Caco-2 (cell line): ENCODE measurements at regions of chr9 and their contacts with region 1.

Region 1: DNA sequence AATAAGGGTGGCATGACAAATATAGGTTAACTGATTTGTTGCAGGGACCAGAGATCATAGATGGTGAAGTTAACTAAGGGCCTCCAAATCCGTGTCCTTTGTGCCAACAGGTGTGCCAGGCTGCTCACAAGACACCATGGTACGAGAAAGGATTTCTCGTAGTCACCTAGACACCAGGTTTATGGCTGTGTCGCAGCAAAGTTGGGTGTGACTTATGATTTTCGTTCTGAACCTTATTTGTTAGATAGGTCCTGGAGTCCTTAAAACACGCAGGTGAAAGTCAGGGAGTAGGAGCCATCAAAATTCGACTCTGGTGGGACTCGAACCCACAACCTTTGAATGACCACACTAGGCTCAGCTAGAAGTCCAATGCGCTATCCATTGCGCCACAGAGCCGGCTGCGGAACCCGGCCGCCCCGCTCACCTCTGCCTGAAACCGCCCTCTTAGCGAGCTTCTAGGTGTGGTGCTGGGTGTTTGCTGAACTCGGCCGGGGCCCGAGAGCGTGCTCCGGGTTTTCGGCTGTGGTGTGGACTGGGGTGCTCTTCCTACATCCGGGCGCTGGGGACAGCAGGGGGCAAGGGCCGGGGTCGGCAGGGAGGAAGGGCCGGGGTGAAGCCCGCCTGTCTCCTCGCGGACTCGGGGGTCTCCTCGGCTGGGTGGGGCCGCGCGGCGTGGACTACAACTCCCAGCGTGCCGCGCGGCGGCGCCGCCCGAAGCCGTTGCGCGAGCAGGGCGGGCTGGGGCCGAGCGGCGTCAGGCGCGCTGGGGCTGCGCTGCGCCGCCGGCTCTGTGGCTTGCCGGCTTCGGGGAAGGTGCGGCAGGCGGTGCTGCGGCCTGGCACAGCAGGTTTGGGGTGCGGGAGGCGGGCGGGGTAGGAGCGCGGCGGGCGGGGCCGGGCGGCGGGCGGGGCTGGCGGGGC is at the start of gene SLC27A4:
- DNase-seq: peak; percentile 92
- H3K4me3 ChIP-seq: peak within 1 kb of the TSS; percentile 91
- H3K4me3 Mint-ChIP-seq: peak within 1 kb of the TSS; percentile 81
- H3K27ac Mint-ChIP-seq: peak within 1 kb of the TSS; percentile 94
- H3K4me1 ChIP-seq: no peaks in the 10 kb centered on the region
- H3K4me1 Mint-ChIP-seq: no peaks in the 10 kb centered on the region
- H3K27me3 ChIP-seq: no peaks in the 10 kb centered on the region
- H3K27me3 Mint-ChIP-seq: no peaks in the 10 kb centered on the region
- CTCF ChIP-seq: no peak
- total RNA-seq, gene SLC27A4: 21.1 and 22.8 TPM in 2 replicates

Region 2: DNA sequence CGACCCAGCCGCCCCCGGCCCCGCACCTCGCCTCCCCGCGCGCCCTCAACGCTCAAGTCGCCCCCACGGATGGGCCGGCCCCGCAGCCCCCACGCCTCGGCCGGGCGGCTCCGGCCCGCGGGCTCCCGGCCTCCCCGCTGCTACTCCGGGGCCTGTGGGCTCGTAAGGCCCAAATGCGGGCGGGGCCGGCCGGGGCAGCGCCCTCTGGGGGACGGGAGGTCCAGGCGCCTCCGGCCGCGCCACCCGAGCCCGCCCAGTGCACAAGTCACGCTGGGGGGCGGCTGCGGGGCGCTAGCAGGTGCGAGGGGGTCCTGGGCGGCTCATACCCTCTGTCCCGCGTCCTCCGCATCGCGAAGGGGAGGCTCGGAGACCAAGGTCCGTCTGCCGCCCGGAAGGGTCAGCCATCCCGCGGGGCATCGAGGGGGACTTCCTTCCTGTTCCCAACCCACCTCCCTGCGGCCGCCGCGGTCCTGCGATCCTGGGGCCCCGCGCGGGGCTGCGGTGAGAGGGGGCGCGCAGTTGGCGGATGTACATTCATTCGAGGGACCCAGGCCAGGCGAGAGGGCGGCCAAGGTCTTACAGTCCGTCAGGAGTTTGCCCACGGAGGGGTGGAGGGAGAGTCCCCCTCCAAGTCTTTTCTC is 148.5 kb before region 1 on chr9 and contains the start of gene CIZ1:
- CTCF ChIA-PET with region 1: no interaction called
- POLR2A ChIA-PET with region 1: no interaction called
- intact Hi-C with region 1: loop called (anchors 10 kb)
- DNase-seq: peak; percentile 74 to 88
- H3K4me3 ChIP-seq: peak within 1 kb of the TSS; percentile 98
- H3K4me3 Mint-ChIP-seq: peak within 1 kb of the TSS; percentile 89
- H3K27ac Mint-ChIP-seq: peak within 1 kb of the TSS; percentile 96
- H3K4me1 ChIP-seq: 0 out of 2 replicates have a peak, but pooled peaks cover 7% of the 10 kb centered on the region
- H3K4me1 Mint-ChIP-seq: peaks cover 8% of the 10 kb centered on the region
- H3K27me3 ChIP-seq: no peaks in the 10 kb centered on the region
- H3K27me3 Mint-ChIP-seq: no peaks in the 10 kb centered on the region
- CTCF ChIP-seq: peak; percentile 61 to 79
- total RNA-seq, gene CIZ1: 154 and 187 TPM in 2 replicates

Region 3: DNA sequence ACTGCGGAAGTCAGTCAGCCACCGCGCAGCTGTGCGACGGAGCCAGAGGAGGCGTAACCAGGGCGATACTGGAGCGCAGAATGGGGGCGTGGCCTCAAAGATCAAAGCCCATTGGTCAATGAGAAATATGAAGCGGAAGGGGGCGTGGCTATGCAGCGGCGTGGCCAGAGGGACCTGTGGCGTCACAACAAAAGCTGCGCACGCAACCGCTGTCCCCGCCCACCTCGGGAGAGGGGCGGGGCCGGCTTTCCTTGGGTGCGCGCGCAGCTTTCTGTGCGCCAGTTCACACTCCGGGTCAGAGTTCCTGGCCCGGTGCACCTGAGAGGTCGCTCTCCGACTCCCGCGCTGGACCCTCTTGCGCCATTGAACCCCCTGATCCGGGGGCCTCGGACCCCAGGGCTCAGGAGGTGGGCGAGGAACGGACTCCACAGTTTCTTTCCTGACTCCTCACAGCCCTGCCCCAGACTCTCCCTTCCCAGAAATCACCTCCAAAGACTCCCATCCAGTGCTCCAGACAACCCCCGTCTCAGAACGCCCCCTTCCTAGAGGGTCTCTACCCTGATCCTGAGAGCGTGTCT is 63.9 kb before region 1 on chr9 and contains the starts of genes GOLGA2 and SWI5:
- CTCF ChIA-PET with region 1: interaction called, 6 read pairs
- POLR2A ChIA-PET with region 1: no interaction called
- intact Hi-C with region 1: loop called (anchors 1 kb)
- DNase-seq: peak; percentile 99 to 100
- H3K4me3 ChIP-seq: peak within 1 kb of the TSS; percentile 88
- H3K4me3 Mint-ChIP-seq: peak within 1 kb of the TSS; percentile 98
- H3K27ac Mint-ChIP-seq: peak within 1 kb of the TSS; percentile 97
- H3K4me1 ChIP-seq: peaks cover 5% of the 10 kb centered on the region
- H3K4me1 Mint-ChIP-seq: peaks cover 30% of the 10 kb centered on the region
- H3K27me3 ChIP-seq: no peaks in the 10 kb centered on the region
- H3K27me3 Mint-ChIP-seq: peaks cover 2% of the 10 kb centered on the region
- CTCF ChIP-seq: no peak
- total RNA-seq, gene GOLGA2: 97.7 and 102 TPM in 2 replicates
- total RNA-seq, gene SWI5: 18.0 and 19.8 TPM in 2 replicates

Region 4: DNA sequence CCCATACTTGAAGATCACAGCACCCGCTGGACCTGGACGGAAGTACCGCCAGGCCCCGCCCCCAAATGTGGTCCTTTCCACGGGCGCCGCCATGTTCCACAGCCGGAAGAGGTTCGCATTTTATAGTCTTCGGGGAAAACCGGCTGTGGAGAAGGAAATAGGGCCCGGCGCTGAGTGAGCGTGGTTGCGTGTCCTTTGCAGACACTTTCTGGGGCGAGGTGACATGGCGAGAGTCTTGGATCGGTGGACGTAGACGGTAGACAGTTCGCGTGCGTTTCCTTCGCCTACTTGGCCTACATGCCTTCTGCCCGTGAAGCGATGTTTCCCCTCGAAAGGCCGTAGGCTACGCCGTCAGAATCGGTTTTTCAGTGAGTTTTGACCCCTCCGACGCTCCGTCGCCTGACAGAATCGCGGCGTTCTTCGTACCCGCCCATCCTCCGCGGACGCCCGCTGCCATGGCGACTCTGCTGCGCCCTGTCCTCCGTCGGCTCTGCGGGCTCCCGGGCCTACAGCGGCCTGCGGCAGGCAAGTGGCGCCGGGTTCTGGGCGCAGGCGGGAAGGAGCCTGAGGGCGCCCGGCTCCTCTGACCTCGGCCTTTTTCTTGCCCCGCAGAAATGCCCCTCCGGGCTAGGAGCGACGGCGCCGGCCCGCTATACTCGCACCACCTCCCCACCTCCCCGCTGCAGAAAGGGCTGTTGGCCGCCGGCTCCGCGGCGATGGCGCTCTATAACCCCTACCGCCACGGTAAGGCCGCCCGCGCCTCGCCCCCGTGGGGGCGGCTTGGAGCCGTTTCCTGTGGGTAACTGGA is 17.4 kb before region 1 on chr9 and contains the starts of genes COQ4 and TRUB2:
- CTCF ChIA-PET with region 1: no interaction called
- POLR2A ChIA-PET with region 1: no interaction called
- intact Hi-C with region 1: loop called (anchors 1 kb)
- DNase-seq: peak; percentile 92 to 94
- H3K4me3 ChIP-seq: peak within 1 kb of the TSS; percentile 83
- H3K4me3 Mint-ChIP-seq: peak within 1 kb of the TSS; percentile 91
- H3K27ac Mint-ChIP-seq: peak within 1 kb of the TSS; percentile 96
- H3K4me1 ChIP-seq: 0 out of 2 replicates have a peak, but pooled peaks cover 4% of the 10 kb centered on the region
- H3K4me1 Mint-ChIP-seq: peaks cover 1% of the 10 kb centered on the region
- H3K27me3 ChIP-seq: no peaks in the 10 kb centered on the region
- H3K27me3 Mint-ChIP-seq: no peaks in the 10 kb centered on the region
- CTCF ChIP-seq: no peak
- total RNA-seq, gene COQ4: 48.9 and 49.5 TPM in 2 replicates
- total RNA-seq, gene TRUB2: 34.1 and 37.4 TPM in 2 replicates

Region 5: GRCh38 chr9:128361986-128362646 is 22.1 kb after region 1 on chr9:
- CTCF ChIA-PET with region 1: interaction called, 11 read pairs
- POLR2A ChIA-PET with region 1: no interaction called
- intact Hi-C with region 1: no loop called
- DNase-seq: peak; percentile 82 to 85
- H3K4me3 ChIP-seq: peak overlapping the region; percentile 34
- H3K4me3 Mint-ChIP-seq: peak overlapping the region; percentile 81
- H3K27ac Mint-ChIP-seq: peak overlapping the region; percentile 83
- H3K4me1 ChIP-seq: peaks cover 8% of the 10 kb centered on the region; the same call in 1 of the 2 replicates
- H3K4me1 Mint-ChIP-seq: peaks cover 7% of the 10 kb centered on the region
- H3K27me3 ChIP-seq: no peaks in the 10 kb centered on the region
- H3K27me3 Mint-ChIP-seq: no peaks in the 10 kb centered on the region
- CTCF ChIP-seq: peak; percentile 82 to 89

Region 6: DNA sequence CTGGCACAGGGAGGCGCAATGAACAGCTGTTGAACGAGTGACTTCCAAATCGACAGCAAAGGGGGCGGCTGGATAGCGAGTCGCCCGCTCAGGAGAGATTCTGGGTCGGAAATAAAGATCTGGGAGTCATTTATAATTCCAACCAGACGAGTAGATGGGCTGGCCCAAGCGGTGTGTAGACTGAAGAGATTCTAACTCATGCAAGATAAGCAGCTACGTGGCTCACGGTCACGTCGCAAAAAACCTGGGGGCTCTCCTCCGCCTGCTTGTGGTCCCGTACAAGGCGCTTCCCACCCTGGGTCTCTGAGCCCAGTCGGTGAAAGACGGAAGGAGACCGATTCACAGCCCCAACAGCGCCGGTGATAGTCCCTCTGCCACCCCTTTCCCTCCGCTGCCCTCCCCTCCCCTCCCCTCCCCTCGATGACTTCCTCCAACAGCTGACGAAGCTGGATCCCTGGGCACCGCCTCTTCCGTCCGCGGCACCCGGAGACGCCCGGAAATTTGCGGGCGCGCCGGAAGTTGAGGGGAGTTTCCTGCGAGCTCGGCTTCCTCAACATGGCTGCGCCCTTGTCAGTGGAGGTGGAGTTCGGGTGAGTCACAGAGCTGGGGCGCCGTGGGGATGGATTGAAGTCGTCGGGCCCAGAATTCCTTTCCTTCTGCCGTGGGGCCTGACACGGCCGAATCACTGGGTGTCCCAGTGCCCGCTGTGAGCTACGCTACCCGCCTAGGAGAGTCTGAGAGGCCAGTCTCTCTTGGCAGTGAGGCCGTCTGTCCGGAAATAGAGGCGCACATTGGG is 31.0 kb after region 1 on chr9 and contains the start of gene URM1:
- CTCF ChIA-PET with region 1: interaction called, 9 read pairs
- POLR2A ChIA-PET with region 1: interaction called, 6 read pairs
- intact Hi-C with region 1: loop called (anchors 1 kb)
- DNase-seq: peak; percentile 93 to 94
- H3K4me3 ChIP-seq: peak within 1 kb of the TSS; percentile 100
- H3K4me3 Mint-ChIP-seq: peak within 1 kb of the TSS; percentile 79
- H3K27ac Mint-ChIP-seq: peak within 1 kb of the TSS; percentile 71
- H3K4me1 ChIP-seq: peaks cover 12% of the 10 kb centered on the region; the same call in 1 of the 2 replicates
- H3K4me1 Mint-ChIP-seq: peaks cover 14% of the 10 kb centered on the region
- H3K27me3 ChIP-seq: no peaks in the 10 kb centered on the region
- H3K27me3 Mint-ChIP-seq: no peaks in the 10 kb centered on the region
- CTCF ChIP-seq: no peak
- total RNA-seq, gene URM1: 55.9 and 62.7 TPM in 2 replicates